Dorsolateral prefrontal cortex (tissue), 120 donors: ENCODE measurements at regions of chr9 and their contacts with region 1.

Region 1: GRCh38 chr9:99353408-99353807 is 131.3 kb downstream of the SEC61B start:
- DNase-seq: no peak
- H3K4me3 ChIP-seq: no peak overlapping the region
- H3K27ac ChIP-seq: peak overlapping the region in 1 of 59 donors; percentile 6
- H3K27me3 ChIP-seq: peaks cover 0 to 5% (median 0%) of the 10 kb centered on the region in 45 donors
- CTCF ChIP-seq: no peak

Region 2: DNA sequence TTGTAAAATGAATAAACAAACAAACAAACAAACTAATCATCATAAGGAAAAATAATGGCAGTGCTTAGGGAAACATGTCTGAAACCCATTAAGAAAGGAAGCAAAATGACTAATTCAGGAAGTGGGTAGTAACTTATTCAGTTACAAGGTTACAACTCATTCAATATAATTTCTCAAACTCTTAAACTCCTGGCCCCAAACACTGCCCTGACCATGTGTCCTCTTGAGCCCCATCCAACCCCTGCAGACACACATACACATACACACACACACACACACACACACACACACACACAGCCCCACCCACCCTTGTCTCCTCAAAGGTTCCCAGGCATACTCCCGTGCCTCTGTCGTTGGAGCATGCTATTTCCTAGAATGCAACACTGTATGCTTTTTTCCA is 62.6 kb after region 1 on chr9:
- intact Hi-C with region 1: loop called in 1 of 2 experiments (anchors 10 kb)
- DNase-seq: no peak
- H3K4me3 ChIP-seq: no peak overlapping the region
- H3K27ac ChIP-seq: no peak overlapping the region
- H3K27me3 ChIP-seq: no peaks in the 10 kb centered on the region
- CTCF ChIP-seq: no peak

Region 3: DNA sequence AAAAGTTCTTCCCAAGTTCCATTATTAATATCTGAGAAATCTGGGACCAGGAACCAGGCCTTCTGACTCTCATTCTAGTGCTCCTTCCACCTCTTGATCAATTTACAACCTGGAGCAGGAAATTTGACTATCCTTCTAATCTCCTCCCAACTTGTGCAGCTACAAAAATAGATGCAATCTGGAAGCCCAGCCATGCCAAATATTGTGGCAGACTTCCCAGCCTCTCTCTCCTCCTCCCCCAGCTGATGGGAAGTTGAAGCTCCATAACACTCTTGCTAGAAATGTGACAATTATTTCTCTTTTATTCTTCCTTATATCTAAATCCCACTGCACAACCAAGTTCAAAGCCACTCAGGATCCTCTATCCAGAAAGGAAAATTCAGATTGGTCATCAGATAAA is 120.8 kb after region 1 on chr9:
- intact Hi-C with region 1: no loop called
- DNase-seq: peak in 4 of 10 donors; percentile 49 to 80 (median 56)
- H3K4me3 ChIP-seq: no peak overlapping the region
- H3K27ac ChIP-seq: no peak overlapping the region
- H3K27me3 ChIP-seq: no peaks in the 10 kb centered on the region
- CTCF ChIP-seq: no peak